ENCODE measurements at regions of chr6 and their contacts with region 1.

Region 1: GRCh38 chr6:125749173-125749864 is at the start of gene HEY2:
- DNase-seq: peak; percentile 96 to 97
- ATAC-seq: peak; percentile 84 to 93 (median 91)
- H3K4me3 ChIP-seq: peak within 1 kb of the TSS; percentile 89
- H3K27ac ChIP-seq: peak within 1 kb of the TSS; percentile 98
- H3K4me1 ChIP-seq: peaks cover 5% of the 10 kb centered on the region
- H3K27me3 ChIP-seq: no peaks in the 10 kb centered on the region
- CTCF ChIP-seq: no peak
- total RNA-seq, gene HEY2: 4.4 to 80.5 (median 7.5) TPM

Region 2: DNA sequence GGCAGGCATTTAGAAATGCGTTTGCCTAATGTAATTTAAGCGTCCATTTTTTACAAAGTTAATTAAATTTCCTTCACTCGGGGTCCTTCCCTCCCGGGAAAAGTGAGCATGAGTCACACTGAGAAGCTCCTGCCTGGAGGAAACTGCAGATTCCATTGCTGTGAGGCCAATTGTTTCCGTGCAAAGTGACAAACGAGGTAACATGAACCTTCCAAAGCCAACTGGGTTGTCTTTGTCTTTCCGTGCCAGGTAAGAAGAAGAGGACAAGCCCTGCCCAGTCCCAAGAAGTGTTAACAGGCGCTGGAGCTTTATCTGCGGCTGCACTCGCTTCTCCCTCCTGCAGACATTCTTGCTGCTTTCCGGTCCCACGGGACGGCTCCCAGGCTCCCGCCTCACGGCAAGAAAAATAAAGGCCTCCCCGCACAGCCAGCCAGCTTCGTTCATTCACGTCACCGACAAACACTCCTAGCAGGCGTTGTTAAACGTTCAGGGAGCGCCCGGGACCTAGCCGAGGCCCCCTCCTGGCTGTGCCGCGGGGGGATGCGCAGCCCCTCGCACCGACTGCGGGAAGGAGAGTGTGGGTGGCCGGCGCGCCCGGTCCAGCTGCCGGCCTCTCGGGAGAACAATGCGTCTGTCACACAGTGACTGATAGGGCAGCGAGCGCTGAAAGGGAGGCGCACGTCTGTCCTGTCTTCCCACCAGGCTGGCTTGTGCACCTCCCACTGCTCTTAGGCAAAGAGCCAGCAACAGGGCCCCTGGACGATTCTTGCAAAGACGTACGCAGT is 386.1 kb before region 1 on chr6:
- intact Hi-C with region 1: loop called in 1 of 2 experiments (anchors 5 kb)
- DNase-seq: peak; percentile 54 to 76
- ATAC-seq: peak; percentile 78 to 89 (median 81)
- H3K4me3 ChIP-seq: peak overlapping the region; percentile 68
- H3K27ac ChIP-seq: peak overlapping the region; percentile 70
- H3K4me1 ChIP-seq: peaks cover 12% of the 10 kb centered on the region
- H3K27me3 ChIP-seq: peaks cover 0 to 4% (median 0%) of the 10 kb centered on the region in 3 donors
- CTCF ChIP-seq: no peak

Region 3: DNA sequence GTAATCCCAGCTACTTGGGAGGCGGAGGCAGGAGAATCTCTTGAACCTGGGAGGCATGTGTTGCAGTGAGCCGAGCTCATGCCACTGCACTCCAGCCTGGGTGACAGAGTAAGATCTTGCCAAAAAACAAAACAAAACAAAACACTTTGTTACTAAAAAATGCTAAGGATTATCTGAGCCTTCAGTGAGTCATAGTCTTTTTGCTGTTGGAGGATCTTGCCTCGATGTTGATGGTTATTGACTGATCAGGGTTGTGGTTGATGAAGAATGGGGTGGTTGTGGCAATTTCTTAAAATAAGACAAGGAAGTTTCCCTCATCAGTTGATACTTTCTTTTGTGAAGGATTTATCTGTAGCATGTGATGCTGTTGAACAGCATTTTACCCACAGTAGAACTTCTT is 250.7 kb before region 1 on chr6:
- intact Hi-C with region 1: no loop called
- DNase-seq: no peak
- ATAC-seq: no peak
- H3K4me3 ChIP-seq: no peak overlapping the region
- H3K27ac ChIP-seq: no peak overlapping the region
- H3K4me1 ChIP-seq: no peaks in the 10 kb centered on the region
- H3K27me3 ChIP-seq: no peaks in the 10 kb centered on the region
- CTCF ChIP-seq: no peak

Region 4: GRCh38 chr6:125512621-125513020 is 236.7 kb before region 1 on chr6:
- intact Hi-C with region 1: loop called in 1 of 2 experiments (anchors 10 kb)
- DNase-seq: no peak
- ATAC-seq: no peak
- H3K4me3 ChIP-seq: no peak overlapping the region
- H3K27ac ChIP-seq: no peak overlapping the region
- H3K4me1 ChIP-seq: peaks cover 8% of the 10 kb centered on the region
- H3K27me3 ChIP-seq: no peaks in the 10 kb centered on the region
- CTCF ChIP-seq: peak; percentile 21

Region 5: DNA sequence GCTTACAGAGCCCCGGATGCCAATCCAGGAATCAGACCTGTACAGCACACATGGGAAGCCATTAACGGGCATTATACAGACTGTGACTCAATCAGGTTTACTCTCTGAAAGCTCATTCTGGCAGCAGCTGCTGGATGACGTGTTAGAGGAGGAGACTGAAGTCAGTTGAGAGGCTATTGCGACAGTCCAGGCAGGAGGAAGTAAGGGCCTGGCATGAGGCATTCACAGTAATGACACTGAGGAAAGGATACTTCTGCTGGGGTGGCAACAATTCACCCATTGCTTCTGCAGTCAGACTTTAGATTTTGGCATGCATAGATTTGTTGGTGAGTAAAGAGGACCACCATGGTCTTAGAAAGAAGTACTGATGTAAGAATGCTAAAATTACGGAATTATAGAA is 150.9 kb before region 1 on chr6:
- intact Hi-C with region 1: loop called (anchors 1 to 5 kb)
- DNase-seq: peak; percentile 79 to 94
- ATAC-seq: peak; percentile 88 to 95 (median 92)
- H3K4me3 ChIP-seq: peak overlapping the region; percentile 32
- H3K27ac ChIP-seq: peak overlapping the region; percentile 92
- H3K4me1 ChIP-seq: peaks cover 29% of the 10 kb centered on the region
- H3K27me3 ChIP-seq: no peaks in the 10 kb centered on the region
- CTCF ChIP-seq: no peak

Region 6: GRCh38 chr6:125670568-125670967 is 78.8 kb before region 1 on chr6:
- intact Hi-C with region 1: loop called in 1 of 2 experiments (anchors 2 kb)
- DNase-seq: peak in 1 of 2 donors; percentile 19
- ATAC-seq: peak; percentile 92 to 94 (median 92)
- H3K4me3 ChIP-seq: no peak overlapping the region
- H3K27ac ChIP-seq: peak overlapping the region; percentile 79
- H3K4me1 ChIP-seq: peaks cover 13% of the 10 kb centered on the region
- H3K27me3 ChIP-seq: no peaks in the 10 kb centered on the region
- CTCF ChIP-seq: no peak

Region 7: GRCh38 chr6:125821825-125822281 is 72.5 kb after region 1 on chr6:
- intact Hi-C with region 1: no loop called
- DNase-seq: no peak
- ATAC-seq: peak in 1 of 4 donors; percentile 40
- H3K4me3 ChIP-seq: no peak overlapping the region
- H3K27ac ChIP-seq: no peak overlapping the region
- H3K4me1 ChIP-seq: no peaks in the 10 kb centered on the region
- H3K27me3 ChIP-seq: no peaks in the 10 kb centered on the region
- CTCF ChIP-seq: no peak

Region 8: DNA sequence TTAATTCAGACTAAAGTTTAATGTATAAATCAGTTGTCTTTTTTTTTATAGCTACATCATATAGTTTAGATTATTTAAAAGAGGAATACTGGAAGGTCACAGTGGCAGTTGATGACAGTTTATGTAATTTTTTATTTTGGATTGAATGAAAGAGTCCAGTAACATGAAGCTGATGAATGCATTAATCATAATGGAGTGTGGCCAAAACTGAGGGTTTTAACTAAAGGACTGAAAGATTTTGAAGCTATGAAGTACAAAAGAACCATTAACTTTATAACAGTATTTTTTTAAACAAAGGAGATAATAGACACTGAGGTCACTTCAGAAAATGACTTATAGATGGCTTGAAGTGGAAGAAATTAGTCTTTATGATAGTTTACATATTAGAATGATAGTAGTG is 278.3 kb after region 1 on chr6:
- intact Hi-C with region 1: no loop called
- DNase-seq: no peak
- ATAC-seq: no peak
- H3K4me3 ChIP-seq: no peak overlapping the region
- H3K27ac ChIP-seq: no peak overlapping the region
- H3K4me1 ChIP-seq: no peaks in the 10 kb centered on the region
- H3K27me3 ChIP-seq: no peaks in the 10 kb centered on the region
- CTCF ChIP-seq: no peak